Aorta (tissue), 5 donors: ENCODE measurements at regions of chr2 and their contacts with region 1.

Region 1: DNA sequence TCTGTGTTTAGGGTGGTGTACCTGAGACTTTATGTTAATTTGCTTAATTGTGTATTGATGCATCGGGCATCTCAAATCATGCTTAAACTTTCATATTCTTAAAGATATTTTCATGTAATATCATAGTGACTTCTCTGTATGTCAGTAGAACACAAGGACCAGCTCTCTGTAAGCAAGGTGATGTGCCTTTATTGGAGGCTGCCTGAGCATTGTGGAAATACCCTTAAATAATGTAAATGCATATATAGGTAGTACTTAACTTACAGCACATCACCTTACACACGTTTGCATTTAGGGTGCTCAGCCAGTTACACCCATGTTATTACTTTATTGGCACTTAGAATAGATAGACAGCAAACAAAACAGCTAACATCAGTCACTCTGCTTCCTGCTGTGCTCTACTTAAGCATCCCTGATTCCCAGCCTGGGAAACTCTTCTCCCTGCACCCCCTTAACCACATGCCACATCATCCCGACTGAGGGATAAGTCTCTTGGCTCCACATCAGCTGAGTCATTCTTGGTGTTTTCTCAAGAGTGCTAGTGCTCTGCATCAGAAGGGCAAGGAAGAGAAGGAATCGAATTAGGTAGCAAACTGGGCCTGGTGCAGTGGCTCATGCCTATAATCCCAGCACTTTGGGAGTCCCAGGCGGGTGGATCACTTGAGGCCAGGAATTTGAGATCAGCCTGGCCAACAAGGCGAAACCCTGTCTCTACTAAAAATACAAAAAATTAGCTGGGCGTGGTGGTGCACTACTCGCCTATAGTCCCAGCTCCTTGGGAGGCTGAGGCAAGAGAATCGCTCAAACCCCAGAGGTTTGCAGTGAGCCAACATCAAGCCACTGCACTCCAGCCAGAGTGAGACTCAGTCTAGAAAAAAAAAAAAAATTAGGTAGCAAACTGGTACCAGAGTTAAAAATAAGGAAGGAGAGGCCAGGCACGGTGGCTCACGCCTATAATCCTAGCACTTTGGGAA is 108.7 kb downstream of the MAP3K20 start:
- DNase-seq: peak; percentile 69 to 75
- ATAC-seq: peak; percentile 89
- H3K4me3 ChIP-seq: no peak overlapping the region
- H3K27ac ChIP-seq: peak overlapping the region; percentile 80 to 82
- H3K4me1 ChIP-seq: peaks cover 3 to 4% of the 10 kb centered on the region in 2 donors
- H3K27me3 ChIP-seq: no peaks in the 10 kb centered on the region

Region 2: DNA sequence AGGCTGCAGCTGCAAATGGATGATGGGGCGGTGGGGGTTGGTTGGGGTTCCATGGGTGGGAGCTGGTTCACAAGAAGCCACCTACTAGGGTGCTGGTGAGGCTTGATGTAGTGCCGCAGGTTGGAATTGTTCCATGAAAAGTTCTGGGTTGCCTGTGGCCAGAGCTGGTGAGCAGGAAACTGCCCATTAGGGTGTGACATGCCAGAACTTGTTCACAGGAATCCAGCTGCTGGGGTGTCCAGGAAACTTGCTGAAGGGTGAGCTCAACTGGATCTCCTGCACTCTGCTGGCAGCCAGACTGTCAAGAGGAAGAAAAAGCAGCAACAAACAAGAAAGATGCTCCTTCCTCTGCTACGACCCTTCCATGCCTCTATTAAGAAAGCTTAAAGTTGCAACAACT is 59.9 kb before region 1 on chr2:
- intact Hi-C with region 1: loop called in 1 of 2 experiments (anchors 10 kb)
- DNase-seq: no peak
- ATAC-seq: no peak
- H3K4me3 ChIP-seq: no peak overlapping the region
- H3K27ac ChIP-seq: no peak overlapping the region
- H3K4me1 ChIP-seq: peaks cover 3 to 4% of the 10 kb centered on the region in 2 donors
- H3K27me3 ChIP-seq: no peaks in the 10 kb centered on the region

Region 3: DNA sequence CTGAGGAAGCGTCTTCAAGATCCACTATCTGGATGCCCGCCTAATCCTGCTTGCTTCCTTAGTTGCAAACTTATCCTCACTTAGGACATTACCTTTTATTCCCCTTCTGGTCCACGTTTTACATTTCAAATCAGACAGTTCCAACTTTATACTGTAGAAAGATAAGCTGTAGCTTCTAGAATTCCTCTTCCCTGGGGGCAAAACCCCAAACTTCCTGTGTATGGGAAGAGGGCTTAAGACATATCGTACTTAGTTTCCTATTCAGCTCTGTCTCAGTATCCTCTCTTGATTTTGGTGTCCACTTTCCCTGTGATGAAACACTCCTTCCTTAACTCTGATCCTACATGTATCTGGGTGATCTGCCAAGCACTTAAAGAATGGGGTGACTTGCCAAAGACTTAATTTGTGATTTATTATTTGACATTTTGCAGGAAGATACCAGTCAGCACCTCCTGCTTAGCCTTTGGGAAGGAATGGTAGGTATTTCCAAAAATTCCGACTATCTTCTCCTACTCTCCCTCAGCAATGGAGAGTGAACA is 415.6 kb after region 1 on chr2:
- intact Hi-C with region 1: no loop called
- DNase-seq: no peak
- ATAC-seq: no peak
- H3K4me3 ChIP-seq: no peak overlapping the region
- H3K27ac ChIP-seq: no peak overlapping the region
- H3K4me1 ChIP-seq: no peaks in the 10 kb centered on the region
- H3K27me3 ChIP-seq: no peaks in the 10 kb centered on the region